PC-9 (cell line): ENCODE measurements at regions of chr2 and their contacts with region 1.

Region 1: GRCh38 chr2:27174316-27175040 is 25.7 kb downstream of the TCF23 start:
- DNase-seq: no peak
- H3K4me3 ChIP-seq: no peak overlapping the region
- H3K27ac ChIP-seq: no peak overlapping the region
- H3K4me1 ChIP-seq: no peaks in the 10 kb centered on the region
- H3K27me3 ChIP-seq: peaks cover 17% of the 10 kb centered on the region; the same call in 1 of the 2 replicates
- CTCF ChIP-seq: no peak

Region 2: DNA sequence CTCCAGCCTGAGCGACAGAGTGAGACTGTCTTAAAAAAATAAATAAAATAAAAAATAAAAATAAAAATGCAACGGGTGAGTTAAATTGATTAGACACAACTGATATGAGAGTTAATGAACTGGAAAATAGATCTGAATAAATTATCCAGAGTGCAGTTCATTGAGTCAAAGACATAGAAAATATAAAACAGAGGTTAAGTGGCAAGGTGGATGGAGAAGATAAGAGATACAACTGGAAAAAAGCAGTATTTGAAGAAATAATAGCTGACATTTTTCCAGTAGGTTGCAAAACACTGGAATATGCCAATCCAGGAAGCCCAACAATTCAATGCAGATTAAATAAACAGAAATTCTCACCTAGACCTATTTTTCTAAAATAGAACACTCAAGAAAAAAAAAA is 66.3 kb before region 1 on chr2:
- CTCF ChIA-PET with region 1: no interaction called
- POLR2A ChIA-PET with region 1: interaction called, 29 read pairs
- intact Hi-C with region 1: no loop called
- DNase-seq: no peak
- H3K4me3 ChIP-seq: no peak overlapping the region
- H3K27ac ChIP-seq: no peak overlapping the region
- H3K4me1 ChIP-seq: no peaks in the 10 kb centered on the region
- H3K27me3 ChIP-seq: no peaks in the 10 kb centered on the region
- CTCF ChIP-seq: no peak

Region 3: GRCh38 chr2:27162151-27163121 is 12.0 kb before region 1 on chr2:
- CTCF ChIA-PET with region 1: no interaction called
- POLR2A ChIA-PET with region 1: no interaction called
- intact Hi-C with region 1: no loop called
- DNase-seq: peak; percentile 23 to 49
- H3K4me3 ChIP-seq: peak overlapping the region; percentile 37; the same call in 1 of the 2 replicates
- H3K27ac ChIP-seq: no peak overlapping the region
- H3K4me1 ChIP-seq: 0 out of 2 replicates have a peak, but pooled peaks cover 5% of the 10 kb centered on the region
- H3K27me3 ChIP-seq: no peaks in the 10 kb centered on the region
- CTCF ChIP-seq: no peak

Region 4: DNA sequence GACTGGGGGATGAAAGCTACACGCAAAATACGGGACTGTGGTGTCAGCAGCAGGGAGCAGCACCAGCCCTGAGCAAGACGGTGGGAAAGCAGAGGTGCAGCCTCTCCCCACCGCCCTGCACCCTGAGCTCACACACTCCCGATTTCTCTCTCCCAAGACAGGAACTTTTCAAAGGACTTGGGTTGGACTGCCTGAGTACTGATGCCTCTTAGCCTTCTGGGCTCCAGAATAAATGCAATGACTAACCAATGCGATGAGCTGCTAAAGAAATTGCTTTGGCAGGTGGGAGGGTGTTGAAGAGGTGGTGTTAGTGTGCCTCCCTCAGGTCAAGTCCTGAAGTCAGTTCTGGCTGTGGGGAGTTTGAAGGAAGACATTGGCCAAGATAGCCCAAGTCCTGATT is 117.4 kb after region 1 on chr2:
- CTCF ChIA-PET with region 1: no interaction called
- POLR2A ChIA-PET with region 1: interaction called, 22 read pairs
- intact Hi-C with region 1: no loop called
- DNase-seq: no peak
- H3K4me3 ChIP-seq: no peak overlapping the region
- H3K27ac ChIP-seq: peak overlapping the region; percentile 81
- H3K4me1 ChIP-seq: peaks cover 33% of the 10 kb centered on the region
- H3K27me3 ChIP-seq: no peaks in the 10 kb centered on the region
- CTCF ChIP-seq: no peak

Region 5: GRCh38 chr2:27792759-27793158 is 618.3 kb after region 1 on chr2:
- CTCF ChIA-PET with region 1: no interaction called
- POLR2A ChIA-PET with region 1: no interaction called
- intact Hi-C with region 1: no loop called
- DNase-seq: peak in 1 of 2 experiments; percentile 61
- H3K4me3 ChIP-seq: no peak overlapping the region
- H3K27ac ChIP-seq: peak overlapping the region; percentile 68
- H3K4me1 ChIP-seq: peaks cover 16% of the 10 kb centered on the region
- H3K27me3 ChIP-seq: no peaks in the 10 kb centered on the region
- CTCF ChIP-seq: no peak